HEK293T (cell line): ENCODE measurements at regions of chr3 and their contacts with region 1.

Region 1: GRCh38 chr3:46576-46975 is 150.0 kb upstream of the CHL1 start:
- DNase-seq: no peak

Region 2: DNA sequence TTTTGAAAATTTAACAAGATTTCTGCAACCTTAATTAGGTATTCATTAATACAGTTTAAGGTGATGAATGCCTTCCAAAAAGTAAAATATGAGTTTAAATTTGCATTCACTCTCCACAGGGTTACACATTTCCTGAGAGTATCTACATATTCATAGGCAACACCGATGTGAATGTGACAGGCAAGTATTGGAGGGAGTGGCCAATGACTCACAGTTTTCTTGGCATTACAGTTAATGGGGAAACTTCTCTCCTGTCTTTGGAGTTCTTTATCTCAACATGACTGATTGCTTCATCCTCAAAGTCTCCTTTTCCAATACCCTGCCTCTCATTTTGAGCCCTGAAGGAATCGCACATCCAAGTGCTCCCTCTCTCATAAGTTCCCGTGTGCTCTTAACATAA is 31.9 kb before region 1 on chr3:
- CTCF ChIA-PET with region 1: no interaction called
- POLR2A ChIA-PET with region 1: no interaction called
- DNase-seq: no peak

Region 3: GRCh38 chr3:354432-354831 is 307.9 kb after region 1 on chr3:
- CTCF ChIA-PET with region 1: interaction called, 12 read pairs
- POLR2A ChIA-PET with region 1: no interaction called
- DNase-seq: peak; percentile 27